Astrocyte of the cerebellum (primary cell): ENCODE measurements at regions of chr14 and their contacts with region 1.

Region 1: GRCh38 chr14:24366721-24367513 is 1.1 kb upstream of the NFATC4 start:
- DNase-seq: peak; percentile 84
- H3K4me3 ChIP-seq: peak overlapping the region; percentile 92
- CTCF ChIP-seq: no peak

Region 2: GRCh38 chr14:24418492-24418873 is 51.6 kb after region 1 on chr14:
- in situ Hi-C with region 1: loop called (anchors 5 kb)
- DNase-seq: no peak
- H3K4me3 ChIP-seq: no peak overlapping the region
- CTCF ChIP-seq: no peak